ENCODE measurements at regions of chr11 and their contacts with region 1.

Region 1: DNA sequence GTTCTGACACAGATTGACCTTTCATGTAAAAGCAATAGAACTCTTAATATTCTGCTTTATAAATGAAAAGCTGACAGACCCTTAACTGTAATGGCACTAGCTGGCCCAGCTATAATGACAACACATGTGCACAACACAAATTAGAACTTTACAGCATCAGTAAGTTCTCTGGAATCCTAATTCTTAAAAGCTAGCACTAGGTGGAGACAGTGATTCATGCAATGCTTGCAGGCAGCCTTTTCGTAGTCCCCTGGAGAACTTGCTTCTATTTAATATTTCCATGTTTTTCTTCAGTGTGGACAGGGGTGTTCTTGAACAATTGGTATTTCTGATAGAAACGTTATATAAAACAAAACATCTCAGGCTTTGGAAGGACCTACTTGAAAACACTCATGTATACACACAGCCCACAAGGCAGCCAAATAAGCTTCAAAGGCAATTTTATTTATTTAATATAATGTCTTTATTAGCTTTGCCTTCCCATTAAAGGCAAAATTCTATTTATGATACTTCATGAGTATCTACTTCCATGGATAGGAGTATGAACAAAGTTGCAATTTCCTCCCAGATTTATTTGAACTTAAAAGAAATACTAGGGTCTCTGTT is 374.3 kb upstream of the MPPED2 start:
- DNase-seq: no peak
- H3K4me3 ChIP-seq: no peak overlapping the region
- H3K27ac ChIP-seq: no peak overlapping the region
- H3K4me1 ChIP-seq: no peaks in the 10 kb centered on the region
- H3K27me3 ChIP-seq: no peaks in the 10 kb centered on the region
- CTCF ChIP-seq: peak in 2 of 3 experiments; percentile 72 to 75; a peak in 3 of 4 replicates
- EP300 ChIP-seq: no peak
- POLR2A ChIP-seq: no peak
- RAD21 ChIP-seq: peak; percentile 93 to 94

Region 2: DNA sequence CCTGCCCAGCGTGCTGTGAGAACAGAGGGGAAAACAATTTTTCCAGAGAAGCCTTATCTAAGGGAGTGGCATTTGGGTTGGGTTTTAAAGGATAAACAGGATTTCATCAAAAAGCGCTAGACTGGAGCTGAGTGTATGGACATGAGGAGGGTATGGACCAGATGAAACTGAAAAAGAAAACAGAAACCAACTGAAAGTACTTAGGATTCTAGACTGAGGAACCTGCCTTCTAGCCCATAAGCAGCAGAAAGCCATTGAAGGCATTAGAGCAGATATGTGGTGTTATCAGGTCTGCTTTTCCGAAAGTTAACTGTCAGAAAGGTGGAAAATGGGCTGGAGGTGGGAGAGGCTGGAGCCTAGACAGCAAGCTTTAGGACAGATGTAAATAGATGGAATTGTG is 34.4 kb before region 1 on chr11:
- CTCF ChIA-PET with region 1: interaction called, 11 read pairs
- POLR2A ChIA-PET with region 1: no interaction called
- DNase-seq: no peak
- H3K4me3 ChIP-seq: no peak overlapping the region
- H3K27ac ChIP-seq: no peak overlapping the region
- H3K4me1 ChIP-seq: no peaks in the 10 kb centered on the region
- H3K27me3 ChIP-seq: no peaks in the 10 kb centered on the region
- CTCF ChIP-seq: no peak
- EP300 ChIP-seq: no peak
- POLR2A ChIP-seq: no peak
- RAD21 ChIP-seq: no peak

Region 3: GRCh38 chr11:30936491-30936890 is 24.0 kb before region 1 on chr11:
- CTCF ChIA-PET with region 1: no interaction called
- POLR2A ChIA-PET with region 1: no interaction called
- DNase-seq: no peak
- H3K4me3 ChIP-seq: no peak overlapping the region
- H3K27ac ChIP-seq: no peak overlapping the region
- H3K4me1 ChIP-seq: no peaks in the 10 kb centered on the region
- H3K27me3 ChIP-seq: no peaks in the 10 kb centered on the region
- CTCF ChIP-seq: no peak
- EP300 ChIP-seq: no peak
- POLR2A ChIP-seq: no peak
- RAD21 ChIP-seq: no peak

Region 4: DNA sequence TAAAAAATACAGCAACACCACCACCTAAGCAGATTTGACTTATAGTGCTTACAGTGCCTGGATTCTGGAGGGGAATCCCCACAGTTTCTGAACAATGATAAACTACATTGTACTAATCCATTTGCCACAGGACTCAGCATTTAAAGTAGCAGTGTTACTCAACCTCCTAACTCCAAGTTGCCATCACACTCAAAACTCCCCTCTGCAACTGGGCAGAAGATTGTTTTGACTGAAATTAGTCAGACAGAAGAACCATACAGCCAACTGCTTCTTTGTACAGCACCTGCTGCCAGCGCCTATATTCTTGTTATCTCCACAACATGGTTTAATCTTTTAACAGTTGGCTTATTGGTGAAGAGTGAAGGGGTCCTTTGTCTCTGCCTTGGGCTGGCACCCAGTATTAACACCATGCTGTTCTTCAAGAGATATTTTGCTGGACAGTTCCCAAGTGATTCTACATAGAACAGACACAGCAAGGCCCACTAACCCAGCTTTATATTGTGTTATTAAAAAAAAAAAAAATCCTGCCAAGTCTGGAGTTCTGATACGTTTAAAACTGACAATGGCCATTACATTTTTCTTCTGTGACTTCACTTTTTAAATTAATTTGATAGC is 135.8 kb after region 1 on chr11:
- CTCF ChIA-PET with region 1: no interaction called
- POLR2A ChIA-PET with region 1: no interaction called
- DNase-seq: no peak
- H3K4me3 ChIP-seq: no peak overlapping the region
- H3K27ac ChIP-seq: no peak overlapping the region
- H3K4me1 ChIP-seq: no peaks in the 10 kb centered on the region
- H3K27me3 ChIP-seq: no peaks in the 10 kb centered on the region
- CTCF ChIP-seq: no peak
- EP300 ChIP-seq: no peak
- POLR2A ChIP-seq: no peak
- RAD21 ChIP-seq: no peak

Measured in H1 (cell line).